ENCODE measurements at regions of chr6 and their contacts with region 1.

Region 1: GRCh38 chr6:142207265-142207877 is 60.3 kb downstream of the VTA1 start:
- DNase-seq: peak; percentile 53
- H3K4me3 Mint-ChIP-seq: no peak overlapping the region
- H3K27ac Mint-ChIP-seq: no peak overlapping the region
- H3K4me1 Mint-ChIP-seq: no peaks in the 10 kb centered on the region
- H3K27me3 Mint-ChIP-seq: no peaks in the 10 kb centered on the region

Region 2: GRCh38 chr6:142146828-142147662 is 60.3 kb before region 1 on chr6 and contains the starts of genes NMBR and VTA1:
- CTCF ChIA-PET with region 1: interaction called, 10 read pairs
- DNase-seq: peak; percentile 97
- H3K4me3 Mint-ChIP-seq: peak within 1 kb of the TSS; percentile 83
- H3K27ac Mint-ChIP-seq: peak within 1 kb of the TSS; percentile 77
- H3K4me1 Mint-ChIP-seq: peaks cover 45% of the 10 kb centered on the region
- H3K27me3 Mint-ChIP-seq: no peaks in the 10 kb centered on the region

Region 3: GRCh38 chr6:142323377-142324040 is 116.1 kb after region 1 on chr6:
- CTCF ChIA-PET with region 1: no interaction called
- DNase-seq: no peak
- H3K4me3 Mint-ChIP-seq: no peak overlapping the region
- H3K27ac Mint-ChIP-seq: no peak overlapping the region
- H3K4me1 Mint-ChIP-seq: no peaks in the 10 kb centered on the region
- H3K27me3 Mint-ChIP-seq: peaks cover 4% of the 10 kb centered on the region